ENCODE measurements at regions of chr19 and their contacts with region 1.

Region 1: GRCh38 chr19:15125232-15126067 is 18.2 kb downstream of the SYDE1 start:
- DNase-seq: peak; percentile 97
- H3K4me3 Mint-ChIP-seq: peak overlapping the region; percentile 91
- H3K27ac Mint-ChIP-seq: peak overlapping the region; percentile 98
- H3K4me1 Mint-ChIP-seq: peaks cover 37% of the 10 kb centered on the region
- H3K27me3 Mint-ChIP-seq: no peaks in the 10 kb centered on the region

Region 2: DNA sequence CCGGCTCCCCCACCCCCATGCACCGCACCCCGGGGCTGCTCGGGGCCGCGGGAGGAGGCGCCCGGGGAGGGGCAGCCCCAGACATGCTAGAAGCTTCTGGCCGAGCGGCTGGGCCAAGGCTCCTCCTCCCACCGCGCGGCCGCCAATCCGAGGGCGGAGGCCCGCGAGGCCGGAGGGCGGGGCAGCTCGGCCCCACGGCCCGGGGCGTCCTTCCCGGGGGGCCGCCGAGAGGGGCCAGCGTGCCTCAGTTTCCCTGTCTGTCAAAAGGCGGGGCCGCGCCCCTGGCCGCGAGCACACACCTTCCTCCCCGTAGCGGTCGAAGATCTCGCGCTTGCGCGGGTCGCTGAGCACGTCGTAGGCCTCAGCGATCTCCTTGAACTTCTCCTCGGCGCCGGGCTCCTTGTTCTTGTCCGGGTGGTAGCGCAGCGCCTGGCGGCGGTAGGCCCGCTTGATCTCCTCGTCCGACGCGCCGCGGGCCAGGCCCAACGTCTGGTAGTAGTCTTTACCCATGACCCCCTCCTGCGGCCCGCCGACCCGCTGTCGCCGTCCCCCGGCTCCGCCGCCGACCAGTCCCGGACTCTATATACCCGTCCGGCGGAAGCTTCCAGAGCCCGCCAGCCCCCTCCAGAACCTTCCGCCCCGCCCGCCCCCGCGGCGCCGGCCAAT is 607.5 kb before region 1 on chr19 and contains the start of gene DNAJB1:
- intact Hi-C with region 1: loop called (anchors 2 kb)
- DNase-seq: peak; percentile 73
- H3K4me3 Mint-ChIP-seq: peak within 1 kb of the TSS; percentile 91
- H3K27ac Mint-ChIP-seq: peak within 1 kb of the TSS; percentile 94
- H3K4me1 Mint-ChIP-seq: peaks cover 60% of the 10 kb centered on the region
- H3K27me3 Mint-ChIP-seq: peaks cover 2% of the 10 kb centered on the region
- total RNA-seq, gene DNAJB1: 104 and 120 TPM in 2 replicates

Region 3: GRCh38 chr19:14571695-14572490 is 553.6 kb before region 1 on chr19 and contains the start of gene NDUFB7:
- intact Hi-C with region 1: loop called (anchors 1 kb)
- DNase-seq: peak; percentile 90
- H3K4me3 Mint-ChIP-seq: peak within 1 kb of the TSS; percentile 97
- H3K27ac Mint-ChIP-seq: peak within 1 kb of the TSS; percentile 79
- H3K4me1 Mint-ChIP-seq: peaks cover 29% of the 10 kb centered on the region
- H3K27me3 Mint-ChIP-seq: no peaks in the 10 kb centered on the region
- total RNA-seq, gene NDUFB7: 131 and 133 TPM in 2 replicates

Region 4: DNA sequence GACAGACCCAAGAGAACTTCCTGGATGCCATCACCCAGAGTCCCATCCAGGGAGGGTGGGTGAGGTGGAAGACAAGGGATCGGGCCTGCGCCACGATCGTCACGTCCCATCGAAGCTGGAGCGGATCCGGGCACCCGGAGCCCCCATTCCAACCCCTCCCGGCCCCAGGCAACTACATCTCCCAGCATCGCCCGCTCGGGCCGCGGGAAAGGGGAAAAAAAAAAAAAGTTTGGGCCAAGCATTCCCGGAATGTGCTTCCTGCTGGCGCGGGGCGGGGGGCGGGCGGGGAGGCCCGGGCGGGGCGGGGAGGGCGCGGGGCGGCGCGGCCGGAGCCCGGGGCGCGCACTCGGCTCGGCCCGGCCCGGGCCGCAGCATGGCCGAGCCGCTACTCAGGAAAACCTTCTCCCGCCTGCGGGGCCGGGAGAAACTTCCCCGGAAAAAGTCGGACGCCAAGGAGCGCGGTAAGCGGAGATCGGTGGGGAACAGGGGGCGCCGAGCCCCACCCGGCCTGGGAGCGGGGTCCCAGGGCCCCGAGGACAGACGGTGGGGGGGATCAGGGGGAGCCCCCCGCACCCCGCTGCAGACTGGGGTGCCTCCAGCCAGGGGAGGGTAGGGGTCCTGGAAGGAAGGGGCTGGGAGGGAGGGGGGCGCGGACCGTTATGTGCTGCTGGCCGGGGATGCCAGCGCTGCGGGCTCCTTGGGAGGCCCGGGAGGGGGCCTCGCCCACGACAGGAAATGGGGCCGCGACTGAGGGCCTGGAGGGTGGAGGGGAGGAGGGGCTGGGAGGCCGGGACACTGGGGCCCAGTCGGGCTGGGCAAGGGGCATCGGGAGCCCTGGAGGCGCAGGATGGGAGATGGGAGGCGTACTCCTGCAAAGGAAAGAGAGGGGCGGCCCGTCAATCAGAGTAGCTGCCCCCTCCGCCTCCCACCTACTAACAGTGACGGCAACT is 18.1 kb before region 1 on chr19 and contains the start of gene SYDE1:
- intact Hi-C with region 1: no loop called
- DNase-seq: no peak
- H3K4me3 Mint-ChIP-seq: peak within 1 kb of the TSS; percentile 68
- H3K27ac Mint-ChIP-seq: no peak within 1 kb of the TSS
- H3K4me1 Mint-ChIP-seq: no peaks in the 10 kb centered on the region
- H3K27me3 Mint-ChIP-seq: peaks cover 24% of the 10 kb centered on the region
- total RNA-seq, gene SYDE1: 1.6 and 1.7 TPM in 2 replicates

Region 5: GRCh38 chr19:15173746-15174404 is 48.4 kb after region 1 on chr19:
- intact Hi-C with region 1: no loop called
- DNase-seq: no peak
- H3K4me3 Mint-ChIP-seq: no peak overlapping the region
- H3K27ac Mint-ChIP-seq: no peak overlapping the region
- H3K4me1 Mint-ChIP-seq: peaks cover 6% of the 10 kb centered on the region
- H3K27me3 Mint-ChIP-seq: peaks cover 4% of the 10 kb centered on the region

Region 6: DNA sequence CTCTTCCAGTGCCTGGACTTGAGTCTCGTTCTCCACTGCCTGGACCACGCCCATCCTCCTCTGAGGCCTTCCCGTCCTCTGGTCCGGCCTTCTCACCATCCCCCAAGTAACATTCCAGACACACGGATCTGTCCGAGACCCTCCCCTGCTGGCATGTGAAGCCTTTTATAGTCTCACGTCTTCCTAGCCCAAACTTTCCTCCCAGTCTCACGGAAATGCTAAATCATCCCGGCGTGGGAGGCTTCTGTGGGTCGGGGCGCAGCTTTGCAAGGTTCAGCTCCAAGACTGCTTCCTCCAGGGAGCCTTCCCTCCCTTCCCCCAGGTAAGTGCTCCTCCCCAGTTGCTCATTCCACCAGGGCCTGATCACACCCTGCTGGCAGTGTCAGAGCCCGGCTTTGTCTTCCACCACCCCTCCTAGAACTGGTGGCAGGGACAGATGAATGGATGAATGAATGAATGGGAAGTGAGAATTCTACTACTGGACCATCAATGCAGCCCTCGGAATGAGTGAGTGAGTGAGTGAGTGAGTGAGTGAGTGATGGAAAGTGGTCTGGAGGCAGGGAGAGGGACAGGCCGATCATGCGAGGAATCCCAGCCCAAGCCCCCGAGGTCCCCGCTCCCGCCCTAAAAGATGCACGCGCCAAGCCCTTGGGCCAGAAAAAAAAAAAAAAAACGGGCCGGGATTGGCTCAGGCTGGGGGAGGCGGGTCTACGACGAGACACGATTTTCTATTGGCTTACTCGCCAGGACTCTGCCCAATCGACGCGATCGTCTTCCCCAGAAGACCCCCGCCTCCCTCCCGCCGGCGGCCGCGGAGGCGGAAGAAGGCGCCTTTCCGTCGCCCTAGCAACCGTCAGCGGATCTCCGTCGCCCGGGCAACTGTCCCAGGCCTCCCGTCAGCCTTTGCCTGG is 97.5 kb after region 1 on chr19:
- intact Hi-C with region 1: loop called (anchors 1 kb)
- DNase-seq: peak; percentile 78
- H3K4me3 Mint-ChIP-seq: peak overlapping the region; percentile 83
- H3K27ac Mint-ChIP-seq: no peak overlapping the region
- H3K4me1 Mint-ChIP-seq: peaks cover 6% of the 10 kb centered on the region
- H3K27me3 Mint-ChIP-seq: peaks cover 25% of the 10 kb centered on the region

Region 7: DNA sequence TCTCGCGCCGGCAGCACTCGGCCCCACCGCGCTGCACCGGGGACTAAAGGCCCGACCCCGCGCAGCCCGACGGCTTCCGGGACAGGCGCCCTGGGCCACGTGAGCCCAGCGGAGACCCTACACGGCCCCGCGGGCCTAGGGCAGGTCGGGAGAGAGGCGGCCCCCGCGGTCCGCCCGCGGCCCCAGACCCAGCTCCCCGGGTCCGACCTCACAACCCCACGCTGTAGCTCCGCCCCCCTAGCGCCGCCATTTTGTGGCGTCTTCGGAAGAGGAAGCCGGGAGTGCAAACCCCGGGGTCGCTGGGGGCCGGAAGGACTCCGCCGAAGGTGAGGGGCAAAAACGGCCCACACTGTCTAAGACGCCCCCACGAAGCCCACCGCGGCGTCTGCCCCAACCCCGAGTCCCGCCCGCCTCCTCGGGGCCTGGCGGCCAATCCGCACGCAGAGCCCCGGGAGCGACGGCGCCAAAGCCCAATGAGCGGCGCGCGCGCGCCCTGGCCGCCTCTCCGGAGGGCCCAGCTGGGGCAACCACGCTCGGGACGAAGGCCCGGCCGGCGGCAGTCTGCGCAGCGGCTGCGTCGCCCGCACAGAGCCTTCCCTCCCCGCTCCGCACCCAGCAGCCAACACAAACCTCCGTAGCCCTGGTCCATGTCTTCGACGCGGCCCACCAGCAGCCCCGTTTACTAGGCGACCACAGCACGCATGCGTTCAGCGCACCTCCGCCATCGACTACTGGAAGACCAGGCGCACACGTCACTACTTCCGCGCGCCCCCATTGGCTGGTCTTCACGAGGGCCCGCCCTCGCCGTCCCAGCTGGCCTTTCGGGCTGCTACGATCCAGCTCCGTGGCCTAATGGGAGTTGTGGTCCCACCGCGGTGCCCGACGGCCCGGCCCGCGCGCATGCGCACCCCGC is 253.9 kb after region 1 on chr19 and contains the start of gene AKAP8:
- intact Hi-C with region 1: loop called (anchors 1 kb)
- DNase-seq: peak; percentile 98
- H3K4me3 Mint-ChIP-seq: peak within 1 kb of the TSS; percentile 98
- H3K27ac Mint-ChIP-seq: peak within 1 kb of the TSS; percentile 100
- H3K4me1 Mint-ChIP-seq: peaks cover 35% of the 10 kb centered on the region
- H3K27me3 Mint-ChIP-seq: no peaks in the 10 kb centered on the region
- total RNA-seq, gene AKAP8: 52.7 and 57.5 TPM in 2 replicates

Region 8: GRCh38 chr19:15836595-15837337 is 711.3 kb after region 1 on chr19:
- intact Hi-C with region 1: loop called (anchors 10 kb)
- DNase-seq: peak; percentile 94
- H3K4me3 Mint-ChIP-seq: peak overlapping the region; percentile 92
- H3K27ac Mint-ChIP-seq: peak overlapping the region; percentile 99
- H3K4me1 Mint-ChIP-seq: peaks cover 16% of the 10 kb centered on the region
- H3K27me3 Mint-ChIP-seq: no peaks in the 10 kb centered on the region

Region 9: GRCh38 chr19:16470911-16471811 is 1345.7 kb after region 1 on chr19:
- intact Hi-C with region 1: loop called (anchors 2 kb)
- DNase-seq: peak; percentile 22
- H3K4me3 Mint-ChIP-seq: peak overlapping the region; percentile 90
- H3K27ac Mint-ChIP-seq: peak overlapping the region; percentile 72
- H3K4me1 Mint-ChIP-seq: peaks cover 28% of the 10 kb centered on the region
- H3K27me3 Mint-ChIP-seq: no peaks in the 10 kb centered on the region